Left ventricle myocardium superior (tissue), 1 donor: ENCODE measurements at regions of chr3 and their contacts with region 1.

Region 1: GRCh38 chr3:172039436-172040077 is at the start of gene FNDC3B:
- DNase-seq: peak; percentile 94
- ATAC-seq: peak; percentile 88
- total RNA-seq, gene FNDC3B: 64.4 TPM

Region 2: DNA sequence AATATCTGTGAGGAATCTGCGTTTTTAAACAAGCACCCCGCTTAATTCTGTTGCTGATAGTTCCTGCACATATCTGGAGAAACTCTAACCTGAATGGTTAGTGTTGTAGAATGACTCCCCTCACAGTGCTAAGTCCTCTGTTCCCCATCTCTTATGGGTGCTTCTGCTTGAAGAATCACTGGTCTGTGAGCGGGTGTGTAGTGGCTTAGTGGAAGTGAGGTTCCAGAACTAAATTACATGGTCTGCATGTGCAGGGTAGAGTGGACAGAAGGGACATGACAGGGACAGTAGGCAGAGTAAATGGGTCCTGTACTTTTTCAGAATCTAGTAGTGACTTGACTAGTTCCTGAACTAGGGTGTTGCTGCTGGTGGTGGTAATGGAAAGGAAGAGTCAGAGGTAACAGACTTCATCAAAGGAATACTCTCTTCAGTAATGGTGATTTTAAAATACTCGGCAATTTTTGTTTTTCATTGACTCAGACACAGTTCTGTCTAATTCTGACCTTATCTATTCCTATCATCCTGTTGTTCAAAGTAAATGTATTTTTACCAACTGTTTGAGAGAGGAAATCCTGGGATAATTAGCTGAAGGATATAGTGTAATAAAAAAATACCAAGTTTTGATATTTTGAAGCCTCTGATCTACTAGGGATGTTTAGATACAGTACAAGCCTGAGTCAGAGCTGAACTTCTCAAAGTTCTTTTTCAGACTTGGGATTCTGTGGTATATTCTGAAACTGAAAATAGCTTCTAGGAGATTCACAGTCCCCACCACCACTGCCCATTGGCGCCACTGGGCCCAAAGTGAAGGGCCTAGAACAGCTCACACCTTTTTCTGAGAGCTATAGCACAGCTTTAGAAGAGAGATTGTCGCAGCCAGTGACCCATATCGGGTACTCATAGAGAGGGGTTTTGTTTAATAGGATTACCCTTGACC is 55.3 kb after region 1 on chr3:
- intact Hi-C with region 1: loop called (anchors 10 kb)
- DNase-seq: no peak
- ATAC-seq: peak; percentile 8

Region 3: DNA sequence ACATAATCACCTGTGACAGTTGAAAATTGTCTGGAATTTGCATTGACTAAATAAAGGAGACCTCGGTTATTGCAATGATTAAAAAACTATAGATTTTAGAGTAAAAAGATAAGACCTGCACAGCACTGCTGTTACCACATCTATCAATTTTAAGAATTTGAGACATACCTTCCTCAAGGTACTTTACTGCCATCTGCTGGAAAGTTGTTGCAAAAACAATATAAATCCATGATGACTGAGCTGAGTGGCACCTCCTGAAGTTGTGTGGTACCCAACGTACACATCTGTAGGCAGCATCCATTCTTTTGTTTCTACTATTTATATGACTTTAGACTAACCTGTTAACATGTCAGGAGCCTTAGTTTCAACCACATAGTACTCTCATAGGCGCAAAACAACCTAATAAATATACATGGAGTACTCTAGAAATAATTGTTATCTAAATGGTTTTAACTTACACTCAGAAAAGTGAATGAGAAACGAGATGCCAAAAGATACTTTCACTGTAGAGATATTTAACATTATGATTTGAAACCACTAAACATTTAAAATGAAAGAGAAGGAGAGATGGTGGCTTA is 302.0 kb after region 1 on chr3:
- intact Hi-C with region 1: loop called (anchors 10 kb)
- DNase-seq: no peak
- ATAC-seq: peak; percentile 77